ENCODE measurements at regions of chr17 and their contacts with region 1.

Region 1: DNA sequence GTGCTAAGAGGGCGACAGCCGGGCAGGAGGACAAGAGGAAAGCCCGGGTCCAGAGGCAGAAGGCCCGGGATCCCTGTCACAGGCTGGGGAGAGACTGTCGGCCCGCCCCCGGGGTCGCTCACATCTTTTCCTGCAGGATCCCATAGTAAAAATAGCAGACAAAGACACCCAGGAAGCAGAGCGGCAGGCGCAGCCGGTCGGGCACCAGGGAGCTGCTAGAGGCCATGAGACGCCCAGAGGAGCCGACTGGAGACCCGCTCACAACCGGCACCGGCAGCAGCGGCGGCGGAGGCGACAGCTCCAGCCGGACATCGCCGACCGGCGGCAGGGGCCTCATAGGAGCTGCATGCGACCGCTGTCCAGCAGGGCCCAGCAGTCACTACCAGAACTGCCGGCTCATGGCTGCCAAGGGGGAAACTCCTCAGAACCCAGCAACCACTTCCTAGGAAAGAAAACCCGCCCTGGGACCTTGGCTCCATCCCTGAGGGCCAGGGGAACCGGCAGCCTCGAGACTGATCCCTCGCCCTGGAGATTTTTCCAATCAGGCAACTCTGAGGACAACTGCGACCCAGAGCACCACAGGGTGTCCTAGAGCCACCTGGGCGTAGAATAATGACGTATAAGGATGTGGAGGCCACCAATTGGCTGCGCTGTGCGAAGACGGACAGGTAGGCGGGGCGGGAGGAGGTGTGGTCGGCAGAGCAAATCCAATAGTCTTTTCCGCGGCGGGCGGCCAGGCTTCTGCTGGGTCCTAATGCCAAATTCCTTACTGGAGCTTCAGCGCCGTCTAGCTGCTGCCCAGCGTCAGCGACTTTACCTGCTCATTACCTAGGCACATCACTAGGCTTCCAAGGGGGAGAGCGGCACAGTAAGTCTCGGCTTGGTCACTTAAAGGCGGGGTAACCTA is at the start of gene SLC35B1:
- DNase-seq: peak; percentile 89
- ATAC-seq: peak; percentile 99
- H3K4me3 Mint-ChIP-seq: peak within 1 kb of the TSS; percentile 93
- H3K27ac Mint-ChIP-seq: peak within 1 kb of the TSS; percentile 99
- H3K4me1 Mint-ChIP-seq: peaks cover 44% of the 10 kb centered on the region
- H3K27me3 Mint-ChIP-seq: no peaks in the 10 kb centered on the region
- CTCF ChIP-seq: no peak
- total RNA-seq, gene SLC35B1: 51.8 and 53.8 TPM in 2 replicates

Region 2: DNA sequence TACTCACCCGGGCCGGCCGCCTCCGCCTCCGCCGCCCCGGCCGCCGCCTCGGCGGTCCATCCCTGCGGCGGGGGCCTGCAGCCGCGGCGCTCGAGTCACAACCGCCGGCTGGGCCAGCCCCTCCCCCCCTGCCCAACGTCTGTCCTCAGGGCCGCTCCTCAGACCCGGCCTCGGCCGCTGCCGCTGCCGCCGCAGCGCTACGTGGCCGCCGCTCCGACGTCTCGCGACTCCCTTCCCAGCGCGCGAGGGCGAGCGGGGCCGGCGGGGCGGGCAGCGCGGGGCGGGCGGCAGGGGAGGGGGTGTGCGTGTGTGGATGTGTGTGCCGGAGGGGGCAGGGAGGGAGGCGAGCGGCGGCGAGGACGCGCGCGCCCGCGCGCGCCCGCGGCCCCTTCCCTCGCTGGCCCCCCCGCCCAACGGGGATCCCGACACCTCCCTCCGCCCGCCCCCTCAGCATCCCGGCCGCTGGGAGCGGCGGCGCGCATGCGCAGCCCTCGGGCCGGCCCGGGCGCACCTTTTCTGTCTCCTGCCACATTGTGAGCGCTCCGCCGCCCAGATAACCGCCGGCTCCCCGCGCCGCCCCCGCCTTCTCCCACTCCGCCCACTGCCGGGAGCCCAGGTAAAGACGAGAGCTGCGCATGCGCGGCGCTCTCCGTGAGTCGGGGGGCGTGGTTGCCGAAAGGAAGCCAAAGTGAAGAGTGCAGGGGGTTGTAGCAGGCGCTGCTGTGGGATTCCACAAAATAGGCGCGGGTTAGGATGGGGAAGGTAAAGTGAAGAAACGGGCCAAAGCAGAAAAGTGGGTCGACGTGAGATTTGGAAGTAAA is 345.7 kb before region 1 on chr17 and contains the start of gene ZNF652:
- CTCF ChIA-PET with region 1: no interaction called
- POLR2A ChIA-PET with region 1: interaction called, 3 read pairs
- intact Hi-C with region 1: loop called (anchors 1 kb)
- DNase-seq: peak; percentile 95
- ATAC-seq: peak; percentile 69
- H3K4me3 Mint-ChIP-seq: peak within 1 kb of the TSS; percentile 96
- H3K27ac Mint-ChIP-seq: peak within 1 kb of the TSS; percentile 96
- H3K4me1 Mint-ChIP-seq: peaks cover 61% of the 10 kb centered on the region
- H3K27me3 Mint-ChIP-seq: no peaks in the 10 kb centered on the region
- CTCF ChIP-seq: no peak
- total RNA-seq, gene ZNF652: 37.1 and 40.6 TPM in 2 replicates

Region 3: DNA sequence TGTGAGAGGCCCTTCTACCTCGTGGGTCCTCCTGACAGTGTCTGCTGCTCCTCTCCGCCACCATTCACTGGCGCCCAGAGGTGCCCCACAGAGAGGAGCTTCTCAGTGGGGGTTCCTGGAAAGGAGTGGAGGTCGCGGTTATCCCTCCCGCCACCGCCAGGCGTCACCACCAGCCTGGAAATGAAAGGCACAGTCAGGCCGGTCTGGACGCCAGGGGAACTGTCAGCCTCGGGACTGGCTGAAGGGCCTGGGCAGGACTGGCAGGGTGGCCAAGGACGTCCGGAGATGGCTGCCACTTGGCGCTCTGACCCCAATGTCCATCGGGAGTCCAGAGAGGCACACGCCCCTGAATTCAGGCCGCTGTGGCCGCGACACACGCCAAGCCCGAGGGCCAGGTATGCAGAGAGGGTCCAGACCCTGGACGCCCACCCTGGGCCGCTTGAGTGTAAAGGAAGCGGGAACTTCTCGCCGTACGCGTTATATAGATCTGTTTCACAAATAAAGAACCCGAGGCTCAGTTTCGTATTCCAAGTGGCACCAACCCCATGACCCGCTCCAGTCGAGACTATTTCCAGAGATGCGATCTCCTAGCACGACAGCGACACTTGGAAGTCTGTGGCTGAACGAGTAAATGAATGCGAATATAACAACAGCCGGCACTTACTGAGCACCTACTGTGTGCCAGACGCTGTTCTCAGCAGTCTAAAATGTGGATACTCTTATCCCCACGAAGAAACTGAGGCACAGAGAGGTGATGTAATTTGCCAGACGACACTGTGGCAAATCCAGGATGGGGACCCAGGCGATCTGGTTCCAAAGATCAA is 139.8 kb before region 1 on chr17:
- CTCF ChIA-PET with region 1: interaction called, 11 read pairs
- POLR2A ChIA-PET with region 1: interaction called, 3 read pairs
- intact Hi-C with region 1: loop called (anchors 1 kb)
- DNase-seq: peak; percentile 89
- ATAC-seq: peak; percentile 72
- H3K4me3 Mint-ChIP-seq: peak overlapping the region; percentile 67
- H3K27ac Mint-ChIP-seq: no peak overlapping the region
- H3K4me1 Mint-ChIP-seq: peaks cover 9% of the 10 kb centered on the region
- H3K27me3 Mint-ChIP-seq: peaks cover 29% of the 10 kb centered on the region
- CTCF ChIP-seq: peak; percentile 45

Region 4: DNA sequence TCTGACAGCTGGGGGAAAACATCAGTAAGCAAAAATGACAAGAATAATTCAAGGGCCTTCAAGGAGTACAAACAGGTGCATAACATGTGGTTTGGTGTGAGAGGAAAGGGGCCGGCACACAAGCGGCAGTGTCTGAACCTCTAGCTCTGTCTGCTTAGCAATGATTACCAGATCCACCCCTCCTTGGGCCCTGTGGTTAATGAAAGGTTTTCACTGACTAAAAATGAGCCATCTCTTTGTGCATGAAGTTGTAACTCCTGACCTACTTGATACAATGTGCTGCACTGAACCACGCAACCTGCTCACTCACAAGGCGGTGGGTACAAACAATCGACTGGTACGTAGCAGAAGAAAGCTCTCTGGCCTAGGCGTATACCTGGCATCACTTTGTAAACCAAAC is 40.9 kb after region 1 on chr17:
- CTCF ChIA-PET with region 1: interaction called, 10 read pairs
- POLR2A ChIA-PET with region 1: interaction called, 43 read pairs
- intact Hi-C with region 1: loop called (anchors 1 kb)
- DNase-seq: no peak
- ATAC-seq: peak; percentile 72
- H3K4me3 Mint-ChIP-seq: peak overlapping the region; percentile 64
- H3K27ac Mint-ChIP-seq: peak overlapping the region; percentile 96
- H3K4me1 Mint-ChIP-seq: peaks cover 83% of the 10 kb centered on the region
- H3K27me3 Mint-ChIP-seq: no peaks in the 10 kb centered on the region
- CTCF ChIP-seq: no peak

Region 5: DNA sequence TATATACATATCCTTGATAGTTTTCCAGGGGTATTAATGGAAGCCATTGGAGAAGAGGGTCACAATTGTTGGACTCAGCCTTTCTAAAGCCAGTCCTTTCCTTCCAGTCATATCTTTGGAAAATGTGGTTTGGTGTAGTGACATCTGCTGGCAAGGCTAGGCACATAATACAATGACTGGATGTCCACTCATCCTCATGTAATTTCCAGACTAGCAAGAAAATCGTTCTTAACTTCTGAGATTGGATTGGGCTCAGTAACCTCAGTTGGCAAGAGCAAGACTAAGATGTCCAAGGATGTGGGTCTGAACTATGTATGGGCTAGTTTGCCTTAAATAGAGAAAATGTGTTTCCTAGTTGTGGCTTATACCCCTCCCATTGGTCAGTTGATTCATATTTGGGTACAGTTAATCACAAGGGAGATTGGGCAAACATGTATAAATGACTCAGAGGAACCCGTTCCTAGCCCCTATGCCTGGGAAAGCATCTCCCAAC is 71.9 kb after region 1 on chr17:
- CTCF ChIA-PET with region 1: interaction called, 14 read pairs
- POLR2A ChIA-PET with region 1: interaction called, 9 read pairs
- intact Hi-C with region 1: loop called (anchors 1 kb)
- DNase-seq: no peak
- ATAC-seq: no peak
- H3K4me3 Mint-ChIP-seq: no peak overlapping the region
- H3K27ac Mint-ChIP-seq: no peak overlapping the region
- H3K4me1 Mint-ChIP-seq: no peaks in the 10 kb centered on the region
- H3K27me3 Mint-ChIP-seq: no peaks in the 10 kb centered on the region
- CTCF ChIP-seq: no peak

Region 6: DNA sequence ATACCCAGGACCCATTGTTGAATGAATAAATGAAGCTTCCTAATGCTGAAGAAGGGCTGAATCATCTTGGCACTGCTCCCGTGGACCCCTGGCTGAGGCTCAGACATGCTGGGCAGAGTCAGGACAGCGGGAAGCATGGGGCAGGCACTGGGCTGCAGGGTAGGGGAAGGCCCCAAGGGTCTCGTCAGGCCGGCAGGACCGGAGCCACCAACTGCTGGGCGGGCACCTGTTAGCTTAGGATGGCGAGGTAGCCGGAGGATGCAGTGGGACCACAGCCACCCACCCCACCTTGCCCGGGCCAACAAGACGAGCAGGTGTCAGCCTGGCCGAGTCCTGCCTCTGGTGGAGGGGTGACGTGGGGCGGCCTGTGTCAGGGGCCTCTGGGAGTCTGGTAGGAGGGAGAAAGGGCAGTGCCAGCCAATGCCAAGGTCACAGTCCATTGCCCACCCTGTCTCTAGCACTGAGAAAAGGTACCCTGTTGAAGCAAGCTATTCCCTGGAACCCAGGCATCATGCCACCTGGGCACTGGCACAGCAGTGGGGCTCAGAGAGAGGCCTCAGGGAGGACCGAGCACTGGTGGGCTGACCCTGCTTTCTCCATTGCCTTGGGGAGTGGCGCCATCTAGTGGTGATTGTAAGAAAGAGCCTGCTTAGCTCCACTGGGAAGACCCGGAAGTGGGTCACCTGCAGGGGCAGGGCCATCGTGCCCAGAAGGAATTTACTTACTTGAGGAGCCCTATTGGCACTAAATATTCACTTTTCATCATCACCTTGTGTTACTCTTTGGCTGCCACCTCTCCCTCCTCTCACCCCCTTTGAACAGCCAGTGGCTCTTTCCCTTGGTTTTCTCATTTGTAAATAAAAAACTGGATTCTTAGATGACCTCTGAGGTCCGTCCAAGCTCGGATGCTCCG is 290.2 kb after region 1 on chr17:
- CTCF ChIA-PET with region 1: interaction called, 3 read pairs
- POLR2A ChIA-PET with region 1: no interaction called
- intact Hi-C with region 1: loop called (anchors 5 kb)
- DNase-seq: peak; percentile 59
- ATAC-seq: peak; percentile 82
- H3K4me3 Mint-ChIP-seq: peak overlapping the region; percentile 19
- H3K27ac Mint-ChIP-seq: no peak overlapping the region
- H3K4me1 Mint-ChIP-seq: peaks cover 31% of the 10 kb centered on the region
- H3K27me3 Mint-ChIP-seq: peaks cover 64% of the 10 kb centered on the region
- CTCF ChIP-seq: peak; percentile 71